ENCODE measurements at regions of chr7 and their contacts with region 1.

Region 1: GRCh38 chr7:148262721-148263229 is 327.8 kb upstream of the C7orf33 start:
- DNase-seq: peak; percentile 79
- ATAC-seq: peak; percentile 73
- H3K4me3 Mint-ChIP-seq: peak overlapping the region; percentile 5
- H3K27ac Mint-ChIP-seq: no peak overlapping the region
- H3K4me1 Mint-ChIP-seq: peaks cover 8% of the 10 kb centered on the region
- H3K27me3 Mint-ChIP-seq: peaks cover 20% of the 10 kb centered on the region

Region 2: GRCh38 chr7:147245292-147245691 is 1017.5 kb before region 1 on chr7:
- CTCF ChIA-PET with region 1: no interaction called
- POLR2A ChIA-PET with region 1: no interaction called
- intact Hi-C with region 1: loop called in 1 of 2 experiments (anchors 5 kb)
- DNase-seq: peak; percentile 47
- ATAC-seq: peak; percentile 44
- H3K4me3 Mint-ChIP-seq: no peak overlapping the region
- H3K27ac Mint-ChIP-seq: no peak overlapping the region
- H3K4me1 Mint-ChIP-seq: no peaks in the 10 kb centered on the region
- H3K27me3 Mint-ChIP-seq: peaks cover 2% of the 10 kb centered on the region

Region 3: DNA sequence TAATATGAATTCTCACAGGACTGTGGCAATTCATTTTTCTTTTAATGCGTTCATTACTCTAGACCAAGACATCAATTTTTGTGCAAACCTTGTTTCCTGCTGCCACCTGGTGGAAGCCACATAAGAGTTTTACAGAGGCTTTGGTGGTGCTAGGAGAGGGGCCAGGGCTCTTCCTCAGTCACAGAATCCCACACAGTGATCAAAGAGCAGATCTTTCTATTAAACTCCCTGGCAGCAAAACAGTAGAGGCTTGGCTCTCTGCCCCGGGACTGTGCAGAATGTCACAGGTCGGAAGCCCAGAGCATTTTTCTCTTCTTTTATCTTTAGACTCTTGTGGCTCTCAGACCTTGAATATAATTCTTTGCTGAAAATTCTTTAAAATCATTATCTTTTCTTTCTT is 178.6 kb before region 1 on chr7:
- CTCF ChIA-PET with region 1: interaction called, 5 read pairs
- POLR2A ChIA-PET with region 1: no interaction called
- intact Hi-C with region 1: loop called in 1 of 2 experiments (anchors 1 kb)
- DNase-seq: peak; percentile 49
- ATAC-seq: no peak
- H3K4me3 Mint-ChIP-seq: no peak overlapping the region
- H3K27ac Mint-ChIP-seq: no peak overlapping the region
- H3K4me1 Mint-ChIP-seq: no peaks in the 10 kb centered on the region
- H3K27me3 Mint-ChIP-seq: peaks cover 12% of the 10 kb centered on the region

Region 4: GRCh38 chr7:148242294-148242801 is 20.4 kb before region 1 on chr7:
- CTCF ChIA-PET with region 1: interaction called, 13 read pairs
- POLR2A ChIA-PET with region 1: no interaction called
- intact Hi-C with region 1: no loop called
- DNase-seq: peak; percentile 8
- ATAC-seq: no peak
- H3K4me3 Mint-ChIP-seq: no peak overlapping the region
- H3K27ac Mint-ChIP-seq: no peak overlapping the region
- H3K4me1 Mint-ChIP-seq: no peaks in the 10 kb centered on the region
- H3K27me3 Mint-ChIP-seq: peaks cover 30% of the 10 kb centered on the region

Region 5: GRCh38 chr7:148367731-148368475 is 105.1 kb after region 1 on chr7:
- CTCF ChIA-PET with region 1: no interaction called
- POLR2A ChIA-PET with region 1: no interaction called
- intact Hi-C with region 1: no loop called
- DNase-seq: no peak
- ATAC-seq: no peak
- H3K4me3 Mint-ChIP-seq: no peak overlapping the region
- H3K27ac Mint-ChIP-seq: no peak overlapping the region
- H3K4me1 Mint-ChIP-seq: no peaks in the 10 kb centered on the region
- H3K27me3 Mint-ChIP-seq: peaks cover 7% of the 10 kb centered on the region

Region 6: GRCh38 chr7:148485618-148486017 is 222.8 kb after region 1 on chr7:
- CTCF ChIA-PET with region 1: interaction called, 4 read pairs
- POLR2A ChIA-PET with region 1: no interaction called
- intact Hi-C with region 1: loop called in 1 of 2 experiments (anchors 10 kb)
- DNase-seq: no peak
- ATAC-seq: no peak
- H3K4me3 Mint-ChIP-seq: no peak overlapping the region
- H3K27ac Mint-ChIP-seq: no peak overlapping the region
- H3K4me1 Mint-ChIP-seq: peaks cover 3% of the 10 kb centered on the region
- H3K27me3 Mint-ChIP-seq: peaks cover 4% of the 10 kb centered on the region

Region 7: GRCh38 chr7:148527707-148528168 is 265.0 kb after region 1 on chr7:
- CTCF ChIA-PET with region 1: interaction called, 3 read pairs
- POLR2A ChIA-PET with region 1: no interaction called
- intact Hi-C with region 1: loop called (anchors 1 kb)
- DNase-seq: peak; percentile 95
- ATAC-seq: peak; percentile 99
- H3K4me3 Mint-ChIP-seq: no peak overlapping the region
- H3K27ac Mint-ChIP-seq: no peak overlapping the region
- H3K4me1 Mint-ChIP-seq: peaks cover 6% of the 10 kb centered on the region
- H3K27me3 Mint-ChIP-seq: peaks cover 32% of the 10 kb centered on the region

Region 8: GRCh38 chr7:149071641-149072437 is 809.1 kb after region 1 on chr7:
- CTCF ChIA-PET with region 1: no interaction called
- POLR2A ChIA-PET with region 1: no interaction called
- intact Hi-C with region 1: loop called in 1 of 2 experiments (anchors 10 kb)
- DNase-seq: peak; percentile 70
- ATAC-seq: peak; percentile 84
- H3K4me3 Mint-ChIP-seq: peak overlapping the region; percentile 46
- H3K27ac Mint-ChIP-seq: peak overlapping the region; percentile 63
- H3K4me1 Mint-ChIP-seq: peaks cover 9% of the 10 kb centered on the region
- H3K27me3 Mint-ChIP-seq: no peaks in the 10 kb centered on the region